ENCODE measurements at regions of chr7 and their contacts with region 1.

Region 1: DNA sequence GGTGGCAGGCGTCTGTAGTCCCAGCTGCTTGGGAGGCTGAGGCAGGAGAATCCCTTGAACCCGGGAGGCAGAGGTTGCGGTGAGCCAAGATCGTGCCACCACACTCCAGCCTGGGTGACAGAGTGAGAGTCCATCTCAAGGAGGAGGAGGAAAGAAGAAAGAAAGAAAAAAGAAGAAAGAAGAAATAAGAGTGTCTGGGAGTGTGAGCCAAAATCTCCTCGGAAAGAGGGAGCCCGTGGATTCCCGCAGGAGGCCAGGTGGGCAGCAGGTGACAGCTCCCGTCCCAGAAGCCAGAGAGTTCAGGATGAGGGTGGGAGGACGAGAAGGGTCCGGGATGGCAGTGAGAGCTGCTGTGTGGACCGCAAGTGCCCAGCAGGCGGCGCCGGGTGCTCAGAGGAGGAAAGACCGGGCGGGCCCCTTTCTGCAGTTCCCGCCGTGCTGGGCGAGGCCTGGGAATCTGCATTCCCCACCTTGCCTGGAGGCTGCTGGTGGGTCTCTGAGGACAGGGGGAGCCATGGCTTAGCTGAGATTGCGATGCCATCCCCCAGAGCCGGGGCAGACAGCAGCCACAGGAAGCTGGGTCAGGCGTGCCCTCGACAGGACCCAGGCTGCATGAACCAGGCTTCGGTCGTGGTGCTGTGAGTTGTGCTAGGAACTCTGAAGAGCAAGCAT is 17.1 kb upstream of the AMZ1 start:
- DNase-seq: peak; percentile 82
- ATAC-seq: peak; percentile 95
- H3K4me3 Mint-ChIP-seq: no peak overlapping the region
- H3K27ac Mint-ChIP-seq: no peak overlapping the region
- H3K4me1 Mint-ChIP-seq: peaks cover 4% of the 10 kb centered on the region
- H3K27me3 Mint-ChIP-seq: peaks cover 11% of the 10 kb centered on the region
- CTCF ChIP-seq: peak; percentile 96

Region 2: GRCh38 chr7:2654059-2654458 is 16.8 kb before region 1 on chr7:
- CTCF ChIA-PET with region 1: interaction called, 10 read pairs
- POLR2A ChIA-PET with region 1: interaction called, 3 read pairs
- intact Hi-C with region 1: no loop called
- DNase-seq: no peak
- ATAC-seq: no peak
- H3K4me3 Mint-ChIP-seq: no peak overlapping the region
- H3K27ac Mint-ChIP-seq: no peak overlapping the region
- H3K4me1 Mint-ChIP-seq: no peaks in the 10 kb centered on the region
- H3K27me3 Mint-ChIP-seq: no peaks in the 10 kb centered on the region
- CTCF ChIP-seq: no peak

Region 3: GRCh38 chr7:2680792-2681490 is 10.1 kb after region 1 on chr7:
- CTCF ChIA-PET with region 1: interaction called, 11 read pairs
- POLR2A ChIA-PET with region 1: interaction called, 3 read pairs
- intact Hi-C with region 1: no loop called
- DNase-seq: peak; percentile 72
- ATAC-seq: peak; percentile 64
- H3K4me3 Mint-ChIP-seq: no peak overlapping the region
- H3K27ac Mint-ChIP-seq: no peak overlapping the region
- H3K4me1 Mint-ChIP-seq: no peaks in the 10 kb centered on the region
- H3K27me3 Mint-ChIP-seq: peaks cover 5% of the 10 kb centered on the region
- CTCF ChIP-seq: peak; percentile 70

Region 4: DNA sequence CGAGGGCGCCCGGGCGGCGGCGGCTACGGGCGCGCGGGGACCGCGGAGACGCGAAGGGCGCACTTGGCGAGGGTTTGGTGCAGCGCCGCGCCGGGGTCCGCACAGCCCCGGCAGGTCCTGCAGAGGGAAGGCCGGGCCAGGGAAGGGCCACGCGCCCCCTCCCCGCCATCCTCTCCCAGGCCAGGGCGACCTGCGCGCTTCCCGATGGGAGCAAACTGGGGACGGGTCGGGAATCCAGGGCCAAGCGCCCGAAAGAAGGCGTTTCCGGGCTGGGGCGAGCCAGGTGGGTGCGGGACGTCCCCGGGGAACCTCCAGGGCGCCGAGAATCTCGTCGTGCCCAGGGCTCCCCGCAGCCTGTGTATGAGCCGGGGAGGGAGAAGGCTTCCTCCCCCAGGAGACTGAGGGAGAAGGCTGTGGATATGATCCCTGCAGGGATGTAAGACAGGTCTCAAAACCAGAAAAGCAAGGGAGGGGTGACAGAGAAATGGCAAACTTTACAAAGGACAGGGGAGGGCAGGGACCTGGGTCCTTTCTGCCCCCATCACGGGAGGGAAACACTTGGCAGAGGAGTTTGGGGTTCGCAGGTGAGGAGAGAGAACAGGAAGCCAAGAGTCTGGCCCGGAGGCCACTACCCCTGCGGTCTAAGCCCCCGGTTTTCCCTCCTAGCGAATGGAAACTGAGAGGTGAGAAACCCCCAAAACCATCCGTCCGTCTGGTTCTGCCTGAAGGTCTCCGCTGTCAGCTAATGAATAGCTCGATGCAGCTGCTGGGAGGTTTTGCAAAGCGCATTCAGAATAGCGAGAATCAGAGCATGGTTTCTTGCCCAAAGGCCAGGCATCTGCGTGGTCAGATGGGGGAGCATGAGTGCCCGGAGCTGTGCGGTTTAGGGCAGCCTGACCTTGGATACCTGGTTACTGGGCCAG is 17.8 kb after region 1 on chr7:
- CTCF ChIA-PET with region 1: interaction called, 13 read pairs
- POLR2A ChIA-PET with region 1: interaction called, 3 read pairs
- intact Hi-C with region 1: no loop called
- DNase-seq: peak; percentile 44
- ATAC-seq: peak; percentile 67
- H3K4me3 Mint-ChIP-seq: no peak overlapping the region
- H3K27ac Mint-ChIP-seq: no peak overlapping the region
- H3K4me1 Mint-ChIP-seq: peaks cover 11% of the 10 kb centered on the region
- H3K27me3 Mint-ChIP-seq: peaks cover 42% of the 10 kb centered on the region
- CTCF ChIP-seq: no peak

Region 5: DNA sequence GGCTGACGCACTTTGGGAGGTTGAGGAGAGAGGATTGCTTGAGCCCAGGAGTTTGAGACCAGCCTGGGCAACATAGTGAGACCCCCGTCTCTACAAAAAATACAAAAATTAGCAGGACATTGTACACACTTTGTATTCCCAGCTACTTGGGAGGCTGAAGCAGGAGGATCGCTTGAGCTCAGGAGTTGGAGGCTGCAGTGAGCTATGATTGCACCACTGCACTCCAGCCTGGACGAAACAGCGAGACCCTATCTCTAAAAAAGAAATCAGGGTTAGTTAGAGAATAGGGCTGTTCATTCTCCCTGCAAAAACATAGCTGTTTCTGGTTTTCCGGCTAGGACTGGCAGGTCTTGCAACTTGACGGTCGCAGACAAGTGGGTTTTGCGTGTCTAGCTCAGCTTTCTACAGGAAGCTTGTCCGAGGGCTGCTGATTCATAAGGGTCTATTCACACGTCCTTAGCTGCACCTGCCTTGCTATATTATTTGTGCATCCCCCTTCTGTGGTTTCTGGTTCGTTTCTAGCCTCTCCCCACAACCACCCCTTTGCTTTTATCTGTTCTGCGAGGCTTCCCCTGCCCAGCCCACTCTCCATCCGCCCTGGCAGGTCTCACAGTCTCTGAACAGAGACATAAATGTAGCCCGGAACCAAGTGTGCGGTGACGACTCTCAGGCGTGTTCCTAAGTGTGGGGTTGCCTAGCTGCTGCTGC is 27.9 kb after region 1 on chr7:
- CTCF ChIA-PET with region 1: interaction called, 11 read pairs
- POLR2A ChIA-PET with region 1: interaction called, 3 read pairs
- intact Hi-C with region 1: no loop called
- DNase-seq: peak; percentile 94
- ATAC-seq: peak; percentile 94
- H3K4me3 Mint-ChIP-seq: no peak overlapping the region
- H3K27ac Mint-ChIP-seq: peak overlapping the region; percentile 54
- H3K4me1 Mint-ChIP-seq: peaks cover 23% of the 10 kb centered on the region
- H3K27me3 Mint-ChIP-seq: peaks cover 10% of the 10 kb centered on the region
- CTCF ChIP-seq: no peak

Region 6: GRCh38 chr7:2815161-2815874 is 144.5 kb after region 1 on chr7:
- CTCF ChIA-PET with region 1: no interaction called
- POLR2A ChIA-PET with region 1: no interaction called
- intact Hi-C with region 1: no loop called
- DNase-seq: no peak
- ATAC-seq: no peak
- H3K4me3 Mint-ChIP-seq: no peak overlapping the region
- H3K27ac Mint-ChIP-seq: no peak overlapping the region
- H3K4me1 Mint-ChIP-seq: peaks cover 15% of the 10 kb centered on the region
- H3K27me3 Mint-ChIP-seq: no peaks in the 10 kb centered on the region
- CTCF ChIP-seq: no peak

Measured in activated CD8-positive, alpha-beta T cell treated with anti-CD3 and anti-CD28 coated beads for 36 hours (primary cell).